ENCODE measurements at regions of chr2 and their contacts with region 1.

Region 1: GRCh38 chr2:32553829-32554432 is 73.9 kb upstream of the TTC27 start:
- DNase-seq: peak; percentile 52
- H3K4me3 Mint-ChIP-seq: no peak overlapping the region
- H3K27ac Mint-ChIP-seq: no peak overlapping the region
- H3K4me1 Mint-ChIP-seq: no peaks in the 10 kb centered on the region
- H3K27me3 Mint-ChIP-seq: no peaks in the 10 kb centered on the region
- CTCF ChIP-seq: peak; percentile 49

Region 2: DNA sequence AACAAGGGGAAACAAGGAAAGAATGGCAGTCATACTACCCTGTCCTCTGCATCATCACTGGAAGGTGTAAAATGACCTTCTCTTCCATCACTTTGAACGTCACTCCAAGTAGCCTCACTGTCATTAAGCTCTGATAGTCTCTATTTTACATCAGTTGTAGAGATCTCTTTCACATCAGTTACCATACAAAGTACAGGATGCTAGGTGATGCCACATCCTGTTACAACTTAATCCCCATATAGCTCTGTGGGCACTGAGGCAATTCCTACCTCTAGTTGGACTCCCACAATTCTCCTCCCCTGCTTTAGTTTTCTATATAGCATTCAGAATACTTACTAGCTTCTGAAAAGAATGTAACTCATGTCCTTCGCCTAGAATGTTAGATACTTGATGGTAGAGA is 18.8 kb after region 1 on chr2:
- CTCF ChIA-PET with region 1: no interaction called
- POLR2A ChIA-PET with region 1: no interaction called
- intact Hi-C with region 1: no loop called
- DNase-seq: no peak
- H3K4me3 Mint-ChIP-seq: no peak overlapping the region
- H3K27ac Mint-ChIP-seq: no peak overlapping the region
- H3K4me1 Mint-ChIP-seq: no peaks in the 10 kb centered on the region
- H3K27me3 Mint-ChIP-seq: no peaks in the 10 kb centered on the region
- CTCF ChIP-seq: no peak

Region 3: GRCh38 chr2:32591669-32592463 is 37.9 kb after region 1 on chr2:
- CTCF ChIA-PET with region 1: no interaction called
- POLR2A ChIA-PET with region 1: no interaction called
- intact Hi-C with region 1: no loop called
- DNase-seq: peak; percentile 2
- H3K4me3 Mint-ChIP-seq: no peak overlapping the region
- H3K27ac Mint-ChIP-seq: no peak overlapping the region
- H3K4me1 Mint-ChIP-seq: no peaks in the 10 kb centered on the region
- H3K27me3 Mint-ChIP-seq: no peaks in the 10 kb centered on the region
- CTCF ChIP-seq: no peak

Region 4: DNA sequence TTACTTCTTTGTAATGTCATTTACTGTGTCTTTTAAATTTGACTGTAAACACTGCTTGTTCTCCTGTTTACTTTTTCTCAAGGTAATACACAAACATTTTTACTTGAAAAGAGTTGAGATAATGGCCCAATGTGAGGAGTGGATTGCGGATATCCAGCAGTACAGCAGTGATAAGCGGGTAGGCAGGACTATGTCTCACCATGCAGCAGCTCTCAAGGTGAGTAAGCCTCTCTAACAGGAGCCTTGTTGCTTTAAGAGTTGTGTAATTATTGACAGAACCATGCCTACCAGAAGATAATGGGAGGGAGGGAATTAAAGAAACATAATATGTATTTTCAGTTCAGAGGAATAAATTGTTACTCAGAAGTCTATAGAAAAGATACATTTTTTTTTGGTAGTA is 57.4 kb after region 1 on chr2:
- CTCF ChIA-PET with region 1: interaction called, 3 read pairs
- POLR2A ChIA-PET with region 1: no interaction called
- intact Hi-C with region 1: loop called (anchors 5 kb)
- DNase-seq: no peak
- H3K4me3 Mint-ChIP-seq: no peak overlapping the region
- H3K27ac Mint-ChIP-seq: no peak overlapping the region
- H3K4me1 Mint-ChIP-seq: no peaks in the 10 kb centered on the region
- H3K27me3 Mint-ChIP-seq: no peaks in the 10 kb centered on the region
- CTCF ChIP-seq: no peak

Region 5: GRCh38 chr2:32946314-32947075 is 392.6 kb after region 1 on chr2 and contains the start of gene LTBP1:
- CTCF ChIA-PET with region 1: no interaction called
- POLR2A ChIA-PET with region 1: no interaction called
- intact Hi-C with region 1: loop called (anchors 10 kb)
- DNase-seq: peak; percentile 65
- H3K4me3 Mint-ChIP-seq: peak within 1 kb of the TSS; percentile 70
- H3K27ac Mint-ChIP-seq: no peak within 1 kb of the TSS
- H3K4me1 Mint-ChIP-seq: no peaks in the 10 kb centered on the region
- H3K27me3 Mint-ChIP-seq: no peaks in the 10 kb centered on the region
- CTCF ChIP-seq: peak; percentile 71
- total RNA-seq, gene LTBP1: 99.0 and 119 TPM in 2 replicates

Region 6: GRCh38 chr2:33275689-33276444 is 721.9 kb after region 1 on chr2:
- CTCF ChIA-PET with region 1: no interaction called
- POLR2A ChIA-PET with region 1: no interaction called
- intact Hi-C with region 1: loop called (anchors 5 kb)
- DNase-seq: peak; percentile 93
- H3K4me3 Mint-ChIP-seq: peak overlapping the region; percentile 54
- H3K27ac Mint-ChIP-seq: peak overlapping the region; percentile 76
- H3K4me1 Mint-ChIP-seq: peaks cover 11% of the 10 kb centered on the region
- H3K27me3 Mint-ChIP-seq: no peaks in the 10 kb centered on the region
- CTCF ChIP-seq: no peak

Region 7: GRCh38 chr2:33441235-33441810 is 887.4 kb after region 1 on chr2:
- CTCF ChIA-PET with region 1: interaction called, 4 read pairs
- POLR2A ChIA-PET with region 1: no interaction called
- intact Hi-C with region 1: loop called (anchors 10 kb)
- DNase-seq: peak; percentile 71
- H3K4me3 Mint-ChIP-seq: no peak overlapping the region
- H3K27ac Mint-ChIP-seq: no peak overlapping the region
- H3K4me1 Mint-ChIP-seq: no peaks in the 10 kb centered on the region
- H3K27me3 Mint-ChIP-seq: no peaks in the 10 kb centered on the region
- CTCF ChIP-seq: peak; percentile 80